ENCODE measurements at regions of chr10 and their contacts with region 1.

Region 1: GRCh38 chr10:112434988-112435619 is 11.6 kb downstream of the ZDHHC6 start:
- DNase-seq: no peak
- CTCF ChIP-seq: peak; percentile 39

Region 2: GRCh38 chr10:112344261-112344660 is 90.8 kb before region 1 on chr10:
- CTCF ChIA-PET with region 1: no interaction called
- POLR2A ChIA-PET with region 1: no interaction called
- DNase-seq: no peak
- CTCF ChIP-seq: no peak

Region 3: DNA sequence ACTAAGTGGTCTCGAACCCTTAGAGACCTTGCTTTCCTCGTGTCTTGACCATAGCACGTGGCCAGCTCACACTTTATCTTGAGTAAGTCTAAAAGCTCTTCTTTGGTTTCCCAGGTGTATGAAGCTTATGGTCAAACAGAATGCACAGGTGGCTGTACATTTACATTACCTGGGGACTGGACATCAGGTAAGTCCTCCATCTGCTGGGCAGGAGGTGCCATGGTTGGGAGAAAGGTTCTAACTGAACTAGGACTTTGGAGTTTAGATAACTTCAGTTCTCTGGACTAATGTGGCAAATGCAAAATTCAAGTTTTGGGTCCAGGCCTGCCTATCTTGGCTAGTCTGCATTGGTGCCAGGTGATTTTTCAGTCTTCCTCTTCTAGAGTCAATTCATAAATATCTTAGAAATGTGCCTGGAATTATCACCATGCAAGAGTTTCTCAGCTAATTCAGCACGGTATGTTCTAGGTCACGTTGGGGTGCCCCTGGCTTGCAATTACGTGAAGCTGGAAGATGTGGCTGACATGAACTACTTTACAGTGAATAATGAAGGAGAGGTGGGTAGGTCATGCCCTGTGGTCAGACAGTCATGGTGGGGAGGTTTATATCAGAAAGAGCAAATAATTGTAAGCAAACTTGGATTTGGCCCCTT is 13.5 kb before region 1 on chr10:
- CTCF ChIA-PET with region 1: interaction called, 15 read pairs
- POLR2A ChIA-PET with region 1: no interaction called
- DNase-seq: no peak
- CTCF ChIP-seq: no peak

Region 4: DNA sequence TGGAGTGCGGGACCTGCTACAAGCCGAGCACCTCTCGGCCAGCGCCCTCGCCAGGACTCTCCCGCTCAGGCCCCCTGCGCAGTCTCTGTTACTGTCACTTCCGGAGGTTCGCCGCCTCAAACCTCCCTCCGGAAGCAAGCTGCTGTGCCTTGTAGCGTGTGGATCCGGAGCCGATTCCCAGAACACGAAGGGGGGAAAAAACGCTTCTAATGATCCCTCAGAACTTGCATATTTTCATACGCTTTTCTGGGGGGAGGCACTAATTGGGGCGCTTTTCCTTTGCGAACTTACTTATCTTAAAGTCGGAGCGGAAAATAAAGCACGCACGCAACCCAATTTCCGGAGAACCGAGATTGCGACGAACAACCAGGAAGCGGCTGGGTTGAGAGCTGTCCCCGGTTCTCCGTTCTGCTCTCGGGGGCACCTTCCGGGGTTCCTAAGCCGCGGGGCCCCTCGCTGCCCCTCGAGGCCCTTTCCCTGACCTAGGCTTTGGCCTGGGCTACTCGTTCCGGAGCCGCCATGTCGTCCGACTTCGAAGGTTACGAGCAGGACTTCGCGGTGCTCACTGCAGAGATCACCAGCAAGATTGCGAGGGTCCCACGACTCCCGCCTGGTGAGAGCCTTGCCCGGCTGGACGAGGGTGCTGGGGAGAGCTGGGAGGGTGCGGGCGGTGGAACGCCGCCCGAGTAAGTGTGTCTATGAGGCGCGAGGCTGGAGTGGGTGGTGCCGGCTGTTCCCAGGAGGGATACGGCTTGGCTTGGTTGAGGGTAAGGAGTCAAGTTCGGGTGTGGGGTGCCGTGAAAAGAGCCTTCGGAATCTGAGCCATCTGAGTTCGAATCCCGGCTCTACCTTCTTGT is 12.0 kb after region 1 on chr10 and contains the starts of genes VTI1A and ZDHHC6:
- CTCF ChIA-PET with region 1: interaction called, 14 read pairs
- POLR2A ChIA-PET with region 1: no interaction called
- DNase-seq: peak; percentile 86
- CTCF ChIP-seq: no peak